ENCODE measurements at regions of chr19 and their contacts with region 1.

Region 1: GRCh38 chr19:35458731-35459391 is 10.8 kb downstream of the FFAR2 start:
- DNase-seq: peak; percentile 80

Region 2: DNA sequence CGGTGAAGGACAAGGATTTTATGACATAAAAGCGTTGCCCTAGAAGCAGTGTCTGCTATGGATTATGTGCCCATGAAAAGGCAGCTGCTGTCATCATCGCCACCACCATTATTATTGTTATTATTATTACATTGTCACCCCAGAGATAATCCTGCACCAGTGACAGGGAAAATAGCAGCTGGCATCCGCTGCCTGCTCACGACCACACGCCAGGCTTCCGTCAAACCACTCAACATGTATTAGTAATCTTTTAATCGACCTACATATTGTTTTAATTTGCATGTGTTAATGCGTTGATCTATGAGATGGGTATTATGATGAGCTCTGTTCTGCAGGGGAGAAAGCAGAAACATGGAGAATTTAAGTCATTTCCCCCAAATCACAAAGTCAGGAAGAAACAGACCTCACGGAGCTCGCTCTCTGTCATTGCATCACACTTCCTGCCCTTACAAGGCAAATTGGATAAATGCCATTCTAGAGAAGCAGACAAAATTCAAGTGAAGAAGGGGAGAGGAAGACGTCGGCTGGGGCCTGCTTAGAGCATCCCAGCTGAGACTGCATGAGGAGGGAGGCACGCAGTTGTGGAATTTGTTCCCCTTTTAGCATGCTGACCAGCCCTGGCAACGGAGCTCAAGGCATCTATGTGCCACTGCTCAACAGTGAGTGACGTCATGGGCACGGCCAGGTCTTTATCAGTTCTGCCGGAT is 100.8 kb before region 1 on chr19 and contains the start of gene FFAR3:
- intact Hi-C with region 1: loop called (anchors 5 kb)
- DNase-seq: peak; percentile 76
- total RNA-seq, gene FFAR3: not detected

Measured in cardiac septum (tissue), 1 donor.